ENCODE measurements at regions of chr3 and their contacts with region 1.

Region 1: GRCh38 chr3:157088601-157089454 is 71.1 kb downstream of the CCNL1 start:
- DNase-seq: peak; percentile 87
- H3K4me3 Mint-ChIP-seq: peak overlapping the region; percentile 77
- H3K27ac Mint-ChIP-seq: peak overlapping the region; percentile 79
- H3K4me1 Mint-ChIP-seq: peaks cover 28% of the 10 kb centered on the region
- H3K27me3 Mint-ChIP-seq: no peaks in the 10 kb centered on the region
- CTCF ChIP-seq: no peak

Region 2: DNA sequence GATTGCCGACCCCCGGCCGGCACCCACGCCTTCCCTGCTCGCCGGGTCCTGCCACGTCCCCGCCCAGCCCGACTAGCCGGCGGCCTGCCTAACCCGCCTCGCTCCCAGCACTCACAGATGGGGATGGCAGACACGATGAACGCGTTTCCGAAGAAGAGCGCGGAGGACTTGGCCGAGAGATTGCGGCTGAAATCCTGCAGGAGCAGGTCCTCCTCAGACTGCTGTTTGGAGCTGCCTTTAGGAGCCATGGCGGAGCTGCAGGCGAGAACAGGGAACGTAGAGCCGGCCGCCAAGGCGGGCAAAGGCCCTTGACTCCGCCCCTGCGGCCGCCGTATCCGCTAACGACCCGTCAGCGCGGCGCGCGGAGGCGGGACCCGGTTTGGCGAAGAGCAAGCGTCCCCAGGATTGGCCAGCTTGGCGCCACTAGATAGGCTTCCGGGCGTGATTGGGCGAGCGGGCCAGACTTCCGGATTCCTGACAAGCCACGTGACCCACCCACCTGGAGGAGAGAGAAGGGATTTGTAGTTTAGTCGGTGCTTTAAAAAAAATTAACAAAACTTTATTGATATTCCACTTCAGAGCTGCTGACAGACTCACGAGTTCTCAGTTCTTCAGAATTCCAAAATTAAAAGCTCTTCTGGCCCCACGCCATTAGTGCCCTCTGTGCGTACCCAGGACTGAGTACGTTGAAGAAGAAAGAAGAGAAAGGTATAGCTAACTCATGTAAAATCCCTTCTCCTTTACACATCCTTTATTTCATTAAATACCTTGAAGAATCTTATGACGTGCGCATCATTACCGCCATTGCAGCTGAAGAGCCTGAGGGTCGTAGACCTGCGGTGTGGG is 533.8 kb before region 1 on chr3 and contains the start of gene SSR3:
- CTCF ChIA-PET with region 1: interaction called, 3 read pairs
- POLR2A ChIA-PET with region 1: interaction called, 13 read pairs
- intact Hi-C with region 1: no loop called
- DNase-seq: peak; percentile 99
- H3K4me3 Mint-ChIP-seq: peak within 1 kb of the TSS; percentile 89
- H3K27ac Mint-ChIP-seq: peak within 1 kb of the TSS; percentile 92
- H3K4me1 Mint-ChIP-seq: peaks cover 30% of the 10 kb centered on the region
- H3K27me3 Mint-ChIP-seq: no peaks in the 10 kb centered on the region
- CTCF ChIP-seq: peak; percentile 8
- total RNA-seq, gene SSR3: 447 and 568 TPM in 2 replicates

Region 3: DNA sequence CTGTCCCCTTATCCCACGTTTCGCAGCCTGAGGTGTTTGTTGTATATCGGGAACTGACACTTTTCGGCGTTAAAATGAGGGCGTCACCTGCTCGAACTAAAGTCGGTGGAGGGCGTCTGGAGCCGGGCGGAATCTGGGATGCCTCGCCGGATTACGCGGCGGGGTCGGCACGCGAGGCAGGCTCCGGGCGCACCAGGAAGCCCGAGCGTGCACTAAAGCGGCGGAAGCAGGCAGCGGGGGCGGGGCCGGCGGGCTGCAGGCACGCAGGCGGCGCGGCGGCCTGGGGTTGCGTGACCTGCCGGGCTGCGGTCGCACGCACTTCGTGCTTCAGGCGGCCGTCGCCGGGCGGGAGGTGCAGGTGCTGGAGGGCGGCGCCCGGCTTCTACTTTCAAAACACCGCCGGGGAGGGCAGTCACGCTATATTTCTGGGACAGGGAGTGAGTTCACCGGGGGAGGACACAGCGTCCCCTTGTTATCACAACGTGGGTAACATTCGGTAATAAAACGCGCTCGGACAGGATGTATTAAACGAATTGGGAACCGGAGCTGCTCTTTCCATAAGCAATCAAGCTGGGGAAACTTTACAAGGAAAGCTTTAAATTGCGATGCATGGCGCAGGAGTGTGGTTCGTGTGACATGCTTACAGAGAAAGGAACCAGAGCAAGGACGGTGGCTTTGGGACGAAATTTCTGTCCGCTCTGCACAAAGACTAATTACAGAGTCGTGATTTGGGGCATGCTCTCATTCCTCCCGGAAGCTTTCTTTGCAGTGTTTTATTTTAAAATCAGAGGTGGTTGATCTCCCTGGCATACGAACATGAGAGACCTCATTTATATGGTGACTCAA is 271.8 kb before region 1 on chr3:
- CTCF ChIA-PET with region 1: interaction called, 3 read pairs
- POLR2A ChIA-PET with region 1: interaction called, 25 read pairs
- intact Hi-C with region 1: no loop called
- DNase-seq: peak; percentile 86
- H3K4me3 Mint-ChIP-seq: peak overlapping the region; percentile 82
- H3K27ac Mint-ChIP-seq: peak overlapping the region; percentile 95
- H3K4me1 Mint-ChIP-seq: peaks cover 41% of the 10 kb centered on the region
- H3K27me3 Mint-ChIP-seq: no peaks in the 10 kb centered on the region
- CTCF ChIP-seq: no peak

Region 4: DNA sequence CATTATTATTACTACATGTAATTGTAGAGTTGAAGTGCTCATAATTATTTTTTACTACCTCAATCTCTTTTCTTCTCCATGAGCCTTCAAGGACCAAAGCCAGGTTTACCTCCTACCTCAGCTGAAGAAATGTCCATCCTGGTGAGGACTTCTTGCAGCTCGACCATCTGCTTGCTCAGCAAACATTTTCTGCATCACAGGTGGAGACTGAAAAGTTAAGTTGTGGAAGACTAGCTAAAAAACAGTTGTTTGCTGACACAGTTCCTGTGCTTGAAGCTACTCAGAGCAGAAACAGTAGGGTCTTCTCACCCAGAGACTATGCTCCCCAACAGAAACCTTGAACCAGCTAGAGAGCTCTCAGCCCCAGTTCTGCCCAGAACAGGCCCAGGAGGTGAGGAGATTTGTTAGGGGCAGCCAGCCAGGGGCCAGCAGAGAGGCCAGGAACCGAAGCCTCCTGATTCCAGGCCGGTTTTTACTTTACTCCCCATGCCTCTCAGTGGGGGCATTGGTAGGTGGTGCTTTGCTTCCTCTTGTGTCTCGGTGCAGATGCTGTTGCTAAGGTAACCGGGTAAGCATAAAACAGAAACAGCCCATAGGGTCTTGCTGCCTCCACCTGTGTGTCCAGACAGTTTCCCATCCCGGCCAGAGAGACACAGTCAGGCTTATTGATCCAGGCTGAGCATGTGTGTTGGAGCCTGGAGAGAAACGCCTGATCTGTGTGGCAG is 16.3 kb after region 1 on chr3:
- CTCF ChIA-PET with region 1: interaction called, 6 read pairs
- POLR2A ChIA-PET with region 1: interaction called, 192 read pairs
- intact Hi-C with region 1: no loop called
- DNase-seq: no peak
- H3K4me3 Mint-ChIP-seq: no peak overlapping the region
- H3K27ac Mint-ChIP-seq: peak overlapping the region; percentile 10
- H3K4me1 Mint-ChIP-seq: peaks cover 18% of the 10 kb centered on the region
- H3K27me3 Mint-ChIP-seq: no peaks in the 10 kb centered on the region
- CTCF ChIP-seq: no peak

Region 5: DNA sequence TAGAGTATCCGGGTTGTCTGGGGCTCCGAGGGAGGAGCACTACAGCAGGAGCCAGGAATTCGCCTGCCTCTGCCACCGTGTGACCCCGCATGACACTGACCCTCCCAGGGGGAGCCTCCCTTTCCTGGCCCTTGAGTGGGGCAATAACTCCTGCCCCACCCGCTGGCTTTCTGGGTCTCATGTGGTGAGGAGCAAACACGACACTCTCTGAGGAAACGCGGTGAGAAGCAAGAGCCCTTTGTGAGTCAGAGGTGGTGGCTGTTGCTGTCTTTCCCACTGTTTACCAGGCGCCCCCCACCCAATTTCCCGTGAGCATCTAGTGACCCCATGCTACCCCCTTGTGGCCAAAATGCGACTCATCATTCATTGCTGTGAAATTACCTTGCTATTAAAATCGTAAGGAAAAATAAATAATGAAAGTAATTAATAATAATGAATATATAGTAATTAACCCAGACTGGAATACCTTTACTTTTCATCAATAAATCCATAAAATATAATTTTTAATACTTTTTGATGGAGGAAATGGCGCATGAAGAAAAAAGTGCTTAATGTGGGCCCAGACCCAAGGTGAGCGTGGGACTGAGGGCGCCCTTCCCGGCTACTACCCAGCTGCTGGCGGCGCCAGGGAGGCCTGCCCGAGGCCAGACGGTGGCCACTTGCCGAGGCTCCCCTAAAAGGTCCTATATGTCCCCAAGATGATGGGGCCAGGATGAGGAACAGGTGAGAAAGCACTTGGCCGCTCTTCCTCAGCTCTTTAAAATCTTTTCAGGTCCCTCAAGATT is 41.8 kb after region 1 on chr3:
- CTCF ChIA-PET with region 1: interaction called, 260 read pairs
- POLR2A ChIA-PET with region 1: interaction called, 331 read pairs
- intact Hi-C with region 1: loop called (anchors 2 kb)
- DNase-seq: peak; percentile 80
- H3K4me3 Mint-ChIP-seq: peak overlapping the region; percentile 60
- H3K27ac Mint-ChIP-seq: peak overlapping the region; percentile 96
- H3K4me1 Mint-ChIP-seq: peaks cover 63% of the 10 kb centered on the region
- H3K27me3 Mint-ChIP-seq: no peaks in the 10 kb centered on the region
- CTCF ChIP-seq: peak; percentile 81

Measured in MCF 10A (cell line).